ENCODE measurements at regions of chr13 and their contacts with region 1.

Region 1: GRCh38 chr13:108895220-108895704 is 265.9 kb downstream of the MYO16 start:
- DNase-seq: no peak
- H3K4me3 Mint-ChIP-seq: no peak overlapping the region
- H3K27ac Mint-ChIP-seq: no peak overlapping the region
- H3K4me1 Mint-ChIP-seq: peaks cover 14% of the 10 kb centered on the region
- H3K27me3 Mint-ChIP-seq: no peaks in the 10 kb centered on the region

Region 2: DNA sequence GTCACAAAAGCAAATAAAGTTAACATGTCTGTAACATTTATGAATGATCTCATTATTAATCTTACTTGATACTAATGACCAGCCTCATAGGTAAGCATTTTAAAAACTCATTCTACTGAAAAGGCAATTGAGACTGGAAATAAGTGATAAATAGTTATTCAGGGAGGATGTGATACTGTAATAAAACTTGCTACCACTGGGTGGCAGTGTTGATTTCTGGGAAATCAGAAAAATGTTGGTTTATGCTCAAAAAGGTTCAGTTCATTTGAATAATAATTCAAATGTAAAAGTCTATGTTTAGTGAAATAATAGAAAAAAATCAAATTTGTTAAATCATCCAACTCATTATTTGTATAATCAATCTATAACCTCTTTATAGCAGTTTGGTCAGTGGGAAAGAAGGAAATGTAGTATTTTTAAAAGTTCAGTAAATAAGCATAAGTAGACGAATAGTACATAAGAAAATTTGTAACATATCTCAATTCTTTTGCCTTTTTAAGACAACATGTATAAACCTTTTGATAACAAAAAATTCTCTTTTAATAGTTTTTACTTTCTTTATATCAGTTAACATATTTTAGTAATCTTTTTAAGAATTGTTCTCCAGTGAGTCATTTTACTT is 667.5 kb before region 1 on chr13:
- CTCF ChIA-PET with region 1: interaction called, 3 read pairs
- POLR2A ChIA-PET with region 1: no interaction called
- intact Hi-C with region 1: loop called (anchors 1 kb)
- DNase-seq: no peak
- H3K4me3 Mint-ChIP-seq: no peak overlapping the region
- H3K27ac Mint-ChIP-seq: no peak overlapping the region
- H3K4me1 Mint-ChIP-seq: peaks cover 51% of the 10 kb centered on the region
- H3K27me3 Mint-ChIP-seq: no peaks in the 10 kb centered on the region

Region 3: GRCh38 chr13:108322206-108322824 is 572.9 kb before region 1 on chr13:
- CTCF ChIA-PET with region 1: interaction called, 53 read pairs
- POLR2A ChIA-PET with region 1: no interaction called
- intact Hi-C with region 1: loop called (anchors 1 kb)
- DNase-seq: no peak
- H3K4me3 Mint-ChIP-seq: no peak overlapping the region
- H3K27ac Mint-ChIP-seq: no peak overlapping the region
- H3K4me1 Mint-ChIP-seq: peaks cover 36% of the 10 kb centered on the region
- H3K27me3 Mint-ChIP-seq: no peaks in the 10 kb centered on the region

Region 4: GRCh38 chr13:108508263-108508662 is 387.0 kb before region 1 on chr13:
- CTCF ChIA-PET with region 1: interaction called, 4 read pairs
- POLR2A ChIA-PET with region 1: no interaction called
- intact Hi-C with region 1: loop called (anchors 5 kb)
- DNase-seq: no peak
- H3K4me3 Mint-ChIP-seq: no peak overlapping the region
- H3K27ac Mint-ChIP-seq: no peak overlapping the region
- H3K4me1 Mint-ChIP-seq: peaks cover 11% of the 10 kb centered on the region
- H3K27me3 Mint-ChIP-seq: no peaks in the 10 kb centered on the region

Region 5: DNA sequence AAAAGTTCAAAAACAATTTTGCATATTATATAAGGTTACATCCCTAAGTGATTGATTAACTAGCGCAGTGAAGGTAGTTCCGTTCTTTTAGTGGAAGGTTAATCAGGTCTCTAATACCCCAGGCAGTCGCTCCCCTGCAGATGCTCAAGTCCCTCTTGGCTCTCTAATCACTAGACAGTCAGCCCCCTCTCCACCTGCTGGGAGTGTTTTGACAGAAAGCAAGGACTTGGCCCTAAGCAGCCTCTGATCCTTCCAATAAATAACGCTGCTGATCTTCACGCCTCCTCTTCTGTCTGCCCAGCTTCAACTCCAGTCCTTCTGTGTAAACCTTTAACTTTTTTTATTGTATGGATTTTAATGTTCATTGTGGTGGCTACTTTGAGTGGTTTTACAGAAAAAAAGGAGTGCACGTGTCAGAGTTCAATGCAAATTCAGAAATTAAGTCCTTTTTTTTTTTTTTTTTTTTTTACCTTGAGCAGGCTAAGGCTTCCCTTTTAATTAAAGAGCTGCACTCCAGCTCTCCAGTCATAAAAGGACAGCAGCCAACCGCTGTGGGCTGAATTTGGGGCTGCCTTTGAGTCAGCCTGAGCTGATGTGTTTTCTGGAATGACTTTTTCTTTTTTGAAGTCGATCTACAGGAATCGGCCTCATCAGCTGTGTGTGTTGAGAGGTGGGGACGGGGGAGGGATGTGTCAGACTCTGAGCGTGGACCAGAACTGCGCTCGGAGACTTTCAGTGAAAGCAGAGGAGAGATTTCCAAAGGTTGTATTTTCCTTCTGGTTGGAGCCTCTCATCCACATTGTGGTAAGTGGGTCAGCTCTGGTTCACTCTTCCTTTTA is 299.6 kb before region 1 on chr13:
- CTCF ChIA-PET with region 1: no interaction called
- POLR2A ChIA-PET with region 1: no interaction called
- intact Hi-C with region 1: loop called (anchors 10 kb)
- DNase-seq: peak; percentile 82
- H3K4me3 Mint-ChIP-seq: no peak overlapping the region
- H3K27ac Mint-ChIP-seq: no peak overlapping the region
- H3K4me1 Mint-ChIP-seq: peaks cover 16% of the 10 kb centered on the region
- H3K27me3 Mint-ChIP-seq: peaks cover 10% of the 10 kb centered on the region

Region 6: GRCh38 chr13:108915634-108916512 is 20.6 kb after region 1 on chr13:
- CTCF ChIA-PET with region 1: interaction called, 9 read pairs
- POLR2A ChIA-PET with region 1: no interaction called
- intact Hi-C with region 1: loop called (anchors 1 kb)
- DNase-seq: peak; percentile 95
- H3K4me3 Mint-ChIP-seq: peak overlapping the region; percentile 68
- H3K27ac Mint-ChIP-seq: peak overlapping the region; percentile 78
- H3K4me1 Mint-ChIP-seq: peaks cover 20% of the 10 kb centered on the region
- H3K27me3 Mint-ChIP-seq: no peaks in the 10 kb centered on the region

Region 7: GRCh38 chr13:109468123-109468522 is 572.9 kb after region 1 on chr13:
- CTCF ChIA-PET with region 1: no interaction called
- POLR2A ChIA-PET with region 1: no interaction called
- intact Hi-C with region 1: no loop called
- DNase-seq: no peak
- H3K4me3 Mint-ChIP-seq: no peak overlapping the region
- H3K27ac Mint-ChIP-seq: no peak overlapping the region
- H3K4me1 Mint-ChIP-seq: no peaks in the 10 kb centered on the region
- H3K27me3 Mint-ChIP-seq: peaks cover 1% of the 10 kb centered on the region